Vagina (tissue), 2 donors: ENCODE measurements at regions of chr2 and their contacts with region 1.

Region 1: GRCh38 chr2:118921646-118922045 is 20.3 kb upstream of the MARCO start:
- DNase-seq: no peak
- H3K4me3 ChIP-seq: no peak overlapping the region
- H3K27ac ChIP-seq: no peak overlapping the region
- H3K4me1 ChIP-seq: no peaks in the 10 kb centered on the region
- H3K27me3 ChIP-seq: no peaks in the 10 kb centered on the region
- CTCF ChIP-seq: no peak
- POLR2A ChIP-seq: no peak

Region 2: GRCh38 chr2:116988303-116988702 is 1933.3 kb before region 1 on chr2:
- intact Hi-C with region 1: no loop called
- DNase-seq: no peak
- H3K4me3 ChIP-seq: no peak overlapping the region
- H3K27ac ChIP-seq: no peak overlapping the region
- H3K4me1 ChIP-seq: no peaks in the 10 kb centered on the region
- H3K27me3 ChIP-seq: no peaks in the 10 kb centered on the region
- CTCF ChIP-seq: no peak
- POLR2A ChIP-seq: no peak

Region 3: GRCh38 chr2:117692001-117692763 is 1229.5 kb before region 1 on chr2:
- intact Hi-C with region 1: loop called (anchors 5 kb)
- DNase-seq: no peak
- H3K4me3 ChIP-seq: no peak overlapping the region
- H3K27ac ChIP-seq: no peak overlapping the region
- H3K4me1 ChIP-seq: no peaks in the 10 kb centered on the region
- H3K27me3 ChIP-seq: no peaks in the 10 kb centered on the region
- CTCF ChIP-seq: no peak
- POLR2A ChIP-seq: no peak

Region 4: GRCh38 chr2:118738524-118739308 is 182.9 kb before region 1 on chr2:
- intact Hi-C with region 1: no loop called
- DNase-seq: no peak
- H3K4me3 ChIP-seq: no peak overlapping the region
- H3K27ac ChIP-seq: no peak overlapping the region
- H3K4me1 ChIP-seq: no peaks in the 10 kb centered on the region
- H3K27me3 ChIP-seq: no peaks in the 10 kb centered on the region
- CTCF ChIP-seq: no peak
- POLR2A ChIP-seq: no peak

Region 5: DNA sequence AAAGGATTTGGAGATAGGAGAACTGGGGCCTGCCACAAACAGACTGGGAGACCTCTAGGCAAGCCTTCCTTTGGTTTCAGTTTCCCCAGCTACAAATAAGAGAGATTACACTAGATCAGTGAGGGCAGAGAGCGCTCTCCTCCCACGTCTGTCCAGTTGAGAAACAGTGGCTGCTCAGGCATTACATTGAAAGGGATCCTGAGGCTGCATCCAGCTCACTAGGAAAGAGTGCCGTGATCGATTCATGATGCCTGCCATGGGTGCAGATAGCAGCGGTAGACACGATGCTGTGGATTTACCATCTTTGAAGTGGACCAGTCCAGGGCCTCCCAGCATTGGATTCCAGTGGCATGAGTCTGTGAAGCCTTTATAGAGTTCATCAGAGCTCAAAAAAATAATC is 136.8 kb before region 1 on chr2:
- intact Hi-C with region 1: no loop called
- DNase-seq: peak; percentile 49 to 76
- H3K4me3 ChIP-seq: no peak overlapping the region
- H3K27ac ChIP-seq: no peak overlapping the region
- H3K4me1 ChIP-seq: no peaks in the 10 kb centered on the region
- H3K27me3 ChIP-seq: no peaks in the 10 kb centered on the region
- CTCF ChIP-seq: no peak
- POLR2A ChIP-seq: no peak